OCI-LY7 (cell line): ENCODE measurements at regions of chr3 and their contacts with region 1.

Region 1: DNA sequence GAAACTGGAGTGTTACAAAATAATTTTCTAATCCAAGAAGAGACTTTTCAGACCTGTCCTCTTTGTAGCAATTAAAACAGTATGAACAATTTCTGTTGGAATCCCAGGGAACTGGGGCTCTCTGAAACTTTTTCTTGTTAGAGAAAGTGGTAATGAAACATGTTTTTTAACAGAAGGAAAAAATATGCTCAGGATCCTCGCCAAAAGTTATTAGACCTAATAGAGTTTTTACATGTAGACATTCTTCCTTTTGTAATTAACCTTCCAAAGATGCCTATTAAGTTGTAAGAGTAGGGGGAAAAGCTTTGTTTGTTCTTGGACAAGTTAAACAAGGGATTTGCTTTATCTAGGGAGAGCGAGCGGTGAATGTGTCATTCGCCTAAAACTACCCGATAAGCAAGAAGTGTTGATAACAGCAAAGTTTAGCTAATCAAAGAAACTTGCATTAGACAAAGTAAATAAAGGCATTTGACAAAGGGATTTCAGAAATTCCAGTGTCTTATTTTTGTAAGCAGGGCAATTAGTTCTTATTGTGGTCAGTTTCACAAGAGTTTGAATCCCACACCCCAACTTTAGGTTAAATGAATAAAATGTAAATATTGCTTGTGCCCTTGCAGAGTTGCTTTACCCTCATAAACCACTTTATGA is 2.3 kb downstream of the RARB start:
- DNase-seq: no peak
- H3K4me3 ChIP-seq: no peak overlapping the region
- H3K27ac ChIP-seq: no peak overlapping the region
- H3K4me1 ChIP-seq: no peaks in the 10 kb centered on the region
- CTCF ChIP-seq: no peak

Region 2: DNA sequence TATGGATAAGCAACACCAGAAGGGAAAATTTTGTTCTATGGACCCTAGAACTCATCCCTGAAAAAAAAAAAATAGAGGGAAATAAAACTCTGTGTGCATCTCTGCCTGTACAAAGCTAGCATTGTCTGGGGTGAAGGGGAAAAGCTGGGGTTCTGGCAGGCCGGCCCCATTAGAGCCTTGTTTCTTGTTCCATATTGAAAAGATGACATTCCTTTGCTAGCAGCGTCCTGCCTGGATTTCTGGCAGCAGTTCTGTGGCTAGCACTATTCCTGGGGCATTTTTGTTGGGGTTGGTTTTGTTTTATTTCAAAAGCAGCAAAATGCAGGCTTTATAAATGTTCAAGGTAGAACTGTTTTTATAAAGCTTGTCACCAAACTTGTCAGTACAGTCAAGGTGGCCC is 42.8 kb after region 1 on chr3:
- CTCF ChIA-PET with region 1: no interaction called
- POLR2A ChIA-PET with region 1: interaction called, 12 read pairs
- intact Hi-C with region 1: no loop called
- DNase-seq: no peak
- H3K4me3 ChIP-seq: no peak overlapping the region
- H3K27ac ChIP-seq: no peak overlapping the region
- H3K4me1 ChIP-seq: no peaks in the 10 kb centered on the region
- CTCF ChIP-seq: no peak